IMR-90 (cell line): ENCODE measurements at regions of chr3 and their contacts with region 1.

Region 1: DNA sequence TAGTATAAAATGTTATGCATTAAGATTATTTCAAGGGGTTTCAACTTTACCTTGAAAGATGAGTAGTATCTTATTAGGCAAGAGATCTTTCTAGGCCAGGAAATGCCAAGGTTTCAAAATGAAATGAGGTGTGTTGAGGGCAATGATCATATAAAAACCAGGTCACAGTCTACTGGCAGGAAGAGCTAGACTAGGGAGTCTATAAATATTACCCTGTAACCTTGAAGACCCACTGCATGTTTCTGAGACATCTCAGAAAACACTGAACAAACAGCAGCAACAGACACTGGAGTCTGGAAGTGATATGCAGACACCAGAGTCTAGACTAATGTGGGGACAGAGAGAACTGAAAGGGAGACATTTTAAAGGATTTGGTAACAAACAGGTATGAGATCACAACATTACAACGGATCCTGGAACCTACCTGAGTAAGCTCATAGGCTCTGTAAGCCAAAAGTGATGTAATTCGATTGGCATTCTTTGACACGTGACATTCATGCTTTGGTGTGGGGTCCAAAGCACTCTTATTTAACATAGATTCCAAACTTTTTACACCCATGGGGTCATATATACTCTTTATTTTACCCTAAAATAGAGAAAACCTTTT is 15.0 kb downstream of the TASOR start:
- DNase-seq: no peak
- ATAC-seq: no peak
- H3K4me3 ChIP-seq: no peak overlapping the region
- H3K27ac ChIP-seq: no peak overlapping the region
- H3K4me1 ChIP-seq: no peaks in the 10 kb centered on the region
- H3K27me3 ChIP-seq: no peaks in the 10 kb centered on the region
- CTCF ChIP-seq: no peak
- POLR2A ChIP-seq: no peak
- RAD21 ChIP-seq: no peak

Region 2: DNA sequence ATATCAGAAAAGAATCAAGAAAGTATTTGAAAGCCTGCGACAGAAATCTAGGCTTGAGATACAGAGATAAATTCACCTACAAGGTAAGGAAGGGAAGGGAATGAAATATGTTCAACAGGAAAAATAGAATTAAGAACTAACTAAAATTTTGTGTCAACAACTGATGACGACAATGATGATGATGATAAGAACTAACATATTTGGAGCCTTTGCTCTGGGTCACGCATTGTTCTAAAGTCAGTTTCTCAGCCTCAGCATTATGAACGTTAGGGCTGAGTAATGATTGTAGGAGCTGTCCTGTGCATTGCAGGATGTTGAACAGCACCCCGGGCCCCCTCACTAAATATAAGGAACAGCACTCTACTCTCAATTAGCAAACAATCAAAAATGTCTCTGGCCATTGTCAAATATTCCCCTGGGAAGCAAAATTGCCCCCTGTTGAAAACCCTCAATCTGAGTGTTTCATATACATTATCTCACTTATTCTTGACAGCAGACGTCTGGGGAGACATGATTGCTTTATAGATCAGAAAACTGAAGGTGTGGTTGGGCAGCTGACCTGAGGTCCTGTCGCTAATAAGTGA is 288.3 kb before region 1 on chr3:
- CTCF ChIA-PET with region 1: no interaction called
- POLR2A ChIA-PET with region 1: no interaction called
- dilution Hi-C with region 1: no loop called
- in situ Hi-C with region 1: no loop called
- intact Hi-C with region 1: no loop called
- DNase-seq: no peak
- ATAC-seq: no peak
- H3K4me3 ChIP-seq: no peak overlapping the region
- H3K27ac ChIP-seq: no peak overlapping the region
- H3K4me1 ChIP-seq: no peaks in the 10 kb centered on the region
- H3K27me3 ChIP-seq: no peaks in the 10 kb centered on the region
- CTCF ChIP-seq: no peak
- POLR2A ChIP-seq: no peak
- RAD21 ChIP-seq: no peak

Region 3: GRCh38 chr3:56624725-56625124 is 43.4 kb before region 1 on chr3:
- CTCF ChIA-PET with region 1: no interaction called
- POLR2A ChIA-PET with region 1: no interaction called
- dilution Hi-C with region 1: no loop called
- in situ Hi-C with region 1: no loop called
- intact Hi-C with region 1: loop called (anchors 5 kb)
- DNase-seq: peak; percentile 49
- ATAC-seq: peak; percentile 43
- H3K4me3 ChIP-seq: no peak overlapping the region
- H3K27ac ChIP-seq: no peak overlapping the region
- H3K4me1 ChIP-seq: peaks cover 2% of the 10 kb centered on the region; the same call in 1 of the 2 replicates
- H3K27me3 ChIP-seq: no peaks in the 10 kb centered on the region
- CTCF ChIP-seq: no peak
- POLR2A ChIP-seq: no peak
- RAD21 ChIP-seq: no peak

Region 4: GRCh38 chr3:56633602-56634535 is 34.2 kb before region 1 on chr3:
- CTCF ChIA-PET with region 1: no interaction called
- POLR2A ChIA-PET with region 1: no interaction called
- dilution Hi-C with region 1: no loop called
- in situ Hi-C with region 1: no loop called
- intact Hi-C with region 1: loop called (anchors 5 kb)
- DNase-seq: no peak
- ATAC-seq: no peak
- H3K4me3 ChIP-seq: no peak overlapping the region
- H3K27ac ChIP-seq: no peak overlapping the region
- H3K4me1 ChIP-seq: peaks cover 3% of the 10 kb centered on the region; the same call in 1 of the 2 replicates
- H3K27me3 ChIP-seq: no peaks in the 10 kb centered on the region
- CTCF ChIP-seq: no peak
- POLR2A ChIP-seq: no peak
- RAD21 ChIP-seq: no peak